ENCODE measurements at regions of chr7 and their contacts with region 1.

Region 1: GRCh38 chr7:98802088-98802780 is 67.6 kb downstream of the TMEM130 start:
- DNase-seq: peak; percentile 33
- H3K4me3 ChIP-seq: no peak overlapping the region
- H3K27ac ChIP-seq: no peak overlapping the region
- H3K4me1 ChIP-seq: no peaks in the 10 kb centered on the region
- H3K27me3 ChIP-seq: no peaks in the 10 kb centered on the region
- CTCF ChIP-seq: no peak

Region 2: GRCh38 chr7:98687078-98687800 is 115.0 kb before region 1 on chr7:
- CTCF ChIA-PET with region 1: no interaction called
- dilution Hi-C with region 1: loop called (anchors 10 kb)
- in situ Hi-C with region 1: no loop called
- intact Hi-C with region 1: no loop called
- DNase-seq: no peak
- H3K4me3 ChIP-seq: no peak overlapping the region
- H3K27ac ChIP-seq: no peak overlapping the region
- H3K4me1 ChIP-seq: no peaks in the 10 kb centered on the region
- H3K27me3 ChIP-seq: no peaks in the 10 kb centered on the region
- CTCF ChIP-seq: no peak

Region 3: DNA sequence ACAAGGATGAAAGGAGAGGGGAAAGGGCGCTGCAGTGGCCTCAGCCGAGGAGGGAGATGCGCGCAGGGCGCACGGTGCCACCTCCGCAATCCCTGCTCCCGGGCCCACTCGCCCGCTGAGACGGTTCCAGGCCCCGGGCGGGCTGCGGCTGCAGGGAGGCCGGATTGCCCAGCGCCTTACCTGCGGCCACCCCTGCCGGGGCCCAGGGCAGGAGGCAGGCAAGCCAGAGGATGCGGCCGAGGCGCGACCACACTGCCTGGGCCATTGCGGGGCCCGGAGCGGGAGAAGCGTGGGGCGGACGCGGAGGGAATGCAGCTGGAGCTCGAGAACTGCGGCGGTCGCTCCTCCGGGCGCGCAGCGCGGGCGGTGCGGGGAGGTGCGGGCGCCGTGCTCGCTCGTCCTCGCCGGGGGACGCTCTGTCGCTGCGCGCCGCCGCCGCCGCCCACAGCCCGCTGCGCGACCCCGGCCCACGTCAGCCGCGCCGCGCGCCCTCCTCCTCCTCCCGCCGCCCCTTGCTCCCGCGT is 67.4 kb after region 1 on chr7 and contains the start of gene TMEM130:
- CTCF ChIA-PET with region 1: no interaction called
- dilution Hi-C with region 1: loop called (anchors 10 kb)
- in situ Hi-C with region 1: no loop called
- intact Hi-C with region 1: no loop called
- DNase-seq: no peak
- H3K4me3 ChIP-seq: peak within 1 kb of the TSS in 2 of 3 experiments; percentile 14 to 42
- H3K27ac ChIP-seq: no peak within 1 kb of the TSS
- H3K4me1 ChIP-seq: no peaks in the 10 kb centered on the region
- H3K27me3 ChIP-seq: peaks cover 14% of the 10 kb centered on the region
- CTCF ChIP-seq: no peak
- total RNA-seq, gene TMEM130: not detected

Measured in mammary epithelial cell (primary cell).